Aorta (tissue), 5 donors: ENCODE measurements at regions of chr5 and their contacts with region 1.

Region 1: DNA sequence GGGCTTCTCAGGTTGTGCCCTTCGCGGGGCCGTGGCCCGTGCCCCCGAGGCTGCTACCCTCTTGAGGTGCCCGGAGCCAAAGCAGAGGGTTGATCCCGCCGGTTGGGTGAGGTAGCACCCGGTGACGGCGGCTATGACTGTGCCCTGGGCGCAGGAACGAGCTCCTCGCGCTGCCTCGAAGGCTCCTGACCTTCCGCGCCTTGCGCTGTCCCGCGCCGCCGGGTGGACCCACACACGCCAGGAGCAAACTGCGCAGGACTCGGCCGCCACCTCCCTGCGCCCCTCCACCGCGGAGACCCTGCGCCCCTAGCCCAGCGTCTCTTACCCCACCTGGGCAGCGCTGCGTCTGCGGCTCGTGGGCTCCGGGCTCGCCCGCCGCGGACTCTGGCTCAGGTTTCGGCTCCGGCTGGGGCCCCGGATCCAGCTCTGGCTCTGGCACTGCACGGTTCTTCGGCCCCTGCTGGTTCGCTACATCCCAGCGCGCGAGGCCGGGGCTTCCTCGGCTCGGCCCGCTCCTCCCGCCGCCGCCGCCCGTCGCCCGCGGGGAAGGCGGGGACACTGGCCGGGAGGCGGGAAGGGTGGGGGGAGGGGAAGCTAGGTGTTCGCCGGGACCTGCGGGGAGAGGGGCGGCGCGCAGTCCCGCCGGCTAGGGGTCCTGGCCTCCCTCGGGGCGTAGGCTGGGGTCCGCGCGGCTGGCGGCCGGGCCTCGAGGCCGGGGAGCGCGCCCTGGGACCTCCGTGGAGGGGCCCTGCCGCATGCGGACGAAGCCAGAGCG is 5.4 kb upstream of the PITX1 start:
- DNase-seq: peak; percentile 47 to 59
- ATAC-seq: peak; percentile 21
- H3K4me3 ChIP-seq: no peak overlapping the region
- H3K27ac ChIP-seq: no peak overlapping the region
- H3K4me1 ChIP-seq: no peaks in the 10 kb centered on the region
- H3K27me3 ChIP-seq: no peaks in the 10 kb centered on the region

Region 2: DNA sequence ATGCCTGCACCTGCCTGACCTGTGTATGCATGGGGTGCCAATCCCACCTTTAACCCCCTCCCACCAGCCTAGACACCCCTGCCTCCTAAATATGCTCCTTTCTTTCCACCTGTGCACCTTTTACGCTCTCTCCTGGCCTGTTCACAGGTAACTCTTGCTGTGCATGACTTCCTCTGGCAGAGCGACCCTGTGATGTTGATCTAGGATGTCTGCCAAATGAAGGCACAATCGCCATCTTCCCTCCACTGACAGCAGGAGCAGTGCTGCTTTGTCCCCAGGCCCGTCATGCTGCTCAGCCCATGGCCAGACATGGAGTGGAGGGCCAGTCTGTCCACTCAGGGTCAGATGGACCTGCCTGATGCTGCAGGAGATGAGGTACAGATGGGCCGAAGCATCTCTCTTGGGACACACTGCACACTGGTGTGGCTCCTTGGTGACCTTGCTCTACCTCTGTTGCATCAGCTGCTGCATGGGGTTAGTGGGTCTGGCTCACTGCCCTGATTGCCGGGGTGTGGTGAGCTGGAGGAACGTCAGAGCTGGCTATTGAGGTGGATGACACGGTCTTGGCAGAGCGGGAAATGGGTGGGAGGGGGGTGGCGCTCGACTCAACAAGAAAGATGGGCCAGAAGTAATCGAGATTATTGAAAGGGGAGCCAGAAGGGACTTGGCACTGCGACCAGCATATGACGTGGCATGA is 96.2 kb after region 1 on chr5:
- intact Hi-C with region 1: no loop called
- DNase-seq: peak; percentile 52 to 84
- ATAC-seq: no peak
- H3K4me3 ChIP-seq: no peak overlapping the region
- H3K27ac ChIP-seq: no peak overlapping the region
- H3K4me1 ChIP-seq: no peaks in the 10 kb centered on the region
- H3K27me3 ChIP-seq: no peaks in the 10 kb centered on the region

Region 3: GRCh38 chr5:135147294-135148090 is 108.0 kb after region 1 on chr5:
- intact Hi-C with region 1: no loop called
- DNase-seq: no peak
- ATAC-seq: no peak
- H3K4me3 ChIP-seq: no peak overlapping the region
- H3K27ac ChIP-seq: no peak overlapping the region
- H3K4me1 ChIP-seq: no peaks in the 10 kb centered on the region
- H3K27me3 ChIP-seq: no peaks in the 10 kb centered on the region

Region 4: GRCh38 chr5:135332519-135333150 is 293.2 kb after region 1 on chr5:
- intact Hi-C with region 1: loop called in 1 of 2 experiments (anchors 10 kb)
- DNase-seq: no peak
- ATAC-seq: no peak
- H3K4me3 ChIP-seq: no peak overlapping the region
- H3K27ac ChIP-seq: no peak overlapping the region
- H3K4me1 ChIP-seq: no peaks in the 10 kb centered on the region
- H3K27me3 ChIP-seq: no peaks in the 10 kb centered on the region